CD8-positive, alpha-beta memory T cell (primary cell): ENCODE measurements at regions of chr3 and their contacts with region 1.

Region 1: GRCh38 chr3:52001443-52001974 is 5.8 kb upstream of the RPL29 start:
- DNase-seq: peak; percentile 80 to 92 (median 87)
- H3K4me3 ChIP-seq: no peak overlapping the region
- H3K4me3 Mint-ChIP-seq: peak overlapping the region in 2 of 7 donors; percentile 2 to 7
- H3K27ac ChIP-seq: no peak overlapping the region
- H3K27ac Mint-ChIP-seq: peak overlapping the region in 2 of 8 donors; percentile 11 to 28
- H3K4me1 ChIP-seq: peaks cover 19% of the 10 kb centered on the region
- H3K4me1 Mint-ChIP-seq: peaks cover 7 to 15% (median 10%) of the 10 kb centered on the region in 3 donors
- H3K27me3 ChIP-seq: no peaks in the 10 kb centered on the region
- H3K27me3 Mint-ChIP-seq: peaks cover 0 to 1% of the 10 kb centered on the region in 2 donors

Region 2: GRCh38 chr3:52056968-52057805 is 55.7 kb after region 1 on chr3:
- CTCF ChIA-PET with region 1: interaction called, 20 read pairs
- POLR2A ChIA-PET with region 1: no interaction called
- DNase-seq: peak; percentile 98 to 100 (median 99)
- H3K4me3 ChIP-seq: peak overlapping the region; percentile 99
- H3K4me3 Mint-ChIP-seq: peak overlapping the region; percentile 91 to 95 (median 92)
- H3K27ac ChIP-seq: peak overlapping the region; percentile 78
- H3K27ac Mint-ChIP-seq: peak overlapping the region; percentile 94 to 96 (median 94)
- H3K4me1 ChIP-seq: peaks cover 32% of the 10 kb centered on the region
- H3K4me1 Mint-ChIP-seq: peaks cover 26 to 40% (median 34%) of the 10 kb centered on the region in 3 donors
- H3K27me3 ChIP-seq: no peaks in the 10 kb centered on the region
- H3K27me3 Mint-ChIP-seq: no peaks in the 10 kb centered on the region

Region 3: GRCh38 chr3:52123106-52123725 is 121.7 kb after region 1 on chr3:
- CTCF ChIA-PET with region 1: interaction called, 79 read pairs
- POLR2A ChIA-PET with region 1: interaction called, 5 read pairs
- DNase-seq: peak; percentile 64 to 80 (median 69)
- H3K4me3 ChIP-seq: no peak overlapping the region
- H3K4me3 Mint-ChIP-seq: no peak overlapping the region
- H3K27ac ChIP-seq: no peak overlapping the region
- H3K27ac Mint-ChIP-seq: peak overlapping the region in 1 of 8 donors; percentile 17
- H3K4me1 ChIP-seq: no peaks in the 10 kb centered on the region
- H3K4me1 Mint-ChIP-seq: no peaks in the 10 kb centered on the region
- H3K27me3 ChIP-seq: no peaks in the 10 kb centered on the region
- H3K27me3 Mint-ChIP-seq: no peaks in the 10 kb centered on the region

Region 4: DNA sequence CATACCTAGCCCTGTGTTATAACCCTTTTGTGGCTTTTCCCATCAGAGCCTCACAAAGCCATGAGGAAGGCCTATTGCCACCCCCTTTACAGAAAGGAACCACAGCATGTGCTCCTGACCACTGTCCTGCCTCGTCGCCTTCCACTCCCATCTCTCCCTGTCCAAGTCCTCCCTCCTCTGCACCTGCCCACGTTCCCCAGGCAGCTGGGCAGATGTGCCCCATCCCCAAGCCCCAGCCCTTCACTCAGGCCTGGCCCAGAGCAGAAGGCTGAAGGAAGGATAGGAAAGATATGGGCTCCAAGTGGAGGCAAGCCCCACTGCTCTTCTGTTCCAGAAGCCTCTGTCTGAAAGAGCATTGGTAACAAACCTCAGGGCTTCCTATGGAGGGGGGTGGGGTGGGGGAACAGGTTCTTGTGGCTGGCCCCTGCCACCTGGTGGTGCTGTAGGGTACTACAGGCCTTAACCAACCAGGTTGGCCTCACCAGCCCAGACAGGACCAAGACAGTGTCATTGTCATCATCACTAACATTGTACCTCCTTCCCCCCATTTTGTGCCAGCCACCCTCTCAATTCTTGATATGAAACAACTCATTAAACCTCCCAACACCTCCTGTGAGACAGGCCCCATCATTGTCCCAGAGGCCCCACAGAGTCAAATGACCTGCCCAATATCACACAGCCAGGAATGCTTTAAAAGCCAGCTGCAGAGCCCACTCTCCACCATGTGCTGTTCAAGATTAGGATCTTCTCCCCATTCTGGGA is 142.7 kb after region 1 on chr3:
- CTCF ChIA-PET with region 1: interaction called, 74 read pairs
- POLR2A ChIA-PET with region 1: interaction called, 3 read pairs
- DNase-seq: peak; percentile 75 to 91 (median 83)
- H3K4me3 ChIP-seq: no peak overlapping the region
- H3K4me3 Mint-ChIP-seq: no peak overlapping the region
- H3K27ac ChIP-seq: no peak overlapping the region
- H3K27ac Mint-ChIP-seq: peak overlapping the region in 6 of 8 donors; percentile 10 to 67 (median 34)
- H3K4me1 ChIP-seq: peaks cover 6% of the 10 kb centered on the region
- H3K4me1 Mint-ChIP-seq: peaks cover 6 to 8% (median 8%) of the 10 kb centered on the region in 3 donors
- H3K27me3 ChIP-seq: no peaks in the 10 kb centered on the region
- H3K27me3 Mint-ChIP-seq: no peaks in the 10 kb centered on the region